Cardiac septum (tissue), 1 donor: ENCODE measurements at regions of chr12 and their contacts with region 1.

Region 1: DNA sequence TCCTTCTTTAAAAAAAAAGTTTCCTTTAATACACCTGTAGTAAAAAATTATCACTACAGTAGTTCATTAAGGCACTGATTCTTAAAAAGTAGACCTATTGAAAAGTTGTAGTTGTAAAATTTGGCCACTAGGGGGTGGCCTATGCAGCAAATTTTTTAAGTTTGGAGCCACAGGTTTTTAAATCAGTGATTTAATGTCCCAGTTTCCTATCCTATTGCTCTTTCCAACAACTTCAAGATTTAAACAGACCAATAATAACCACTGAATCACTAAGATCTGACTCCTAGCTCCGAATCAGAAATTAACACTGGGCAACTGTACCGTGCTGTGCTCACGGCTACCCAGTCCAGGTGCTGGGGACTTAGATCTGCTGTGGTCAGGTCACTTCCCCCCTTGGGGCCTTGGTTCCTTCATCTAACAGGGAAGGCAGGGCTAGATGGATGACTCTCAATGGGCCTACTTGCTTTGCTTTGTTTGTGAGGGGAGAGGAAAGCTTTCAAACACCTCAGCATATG is 279.3 kb downstream of the MED13L start:
- DNase-seq: no peak

Region 2: GRCh38 chr12:115155665-115156645 is 842.2 kb before region 1 on chr12:
- intact Hi-C with region 1: no loop called
- DNase-seq: no peak

Region 3: GRCh38 chr12:116708826-116709756 is 710.9 kb after region 1 on chr12:
- intact Hi-C with region 1: loop called (anchors 5 kb)
- DNase-seq: no peak